Panc1 (cell line): ENCODE measurements at regions of chr2 and their contacts with region 1.

Region 1: DNA sequence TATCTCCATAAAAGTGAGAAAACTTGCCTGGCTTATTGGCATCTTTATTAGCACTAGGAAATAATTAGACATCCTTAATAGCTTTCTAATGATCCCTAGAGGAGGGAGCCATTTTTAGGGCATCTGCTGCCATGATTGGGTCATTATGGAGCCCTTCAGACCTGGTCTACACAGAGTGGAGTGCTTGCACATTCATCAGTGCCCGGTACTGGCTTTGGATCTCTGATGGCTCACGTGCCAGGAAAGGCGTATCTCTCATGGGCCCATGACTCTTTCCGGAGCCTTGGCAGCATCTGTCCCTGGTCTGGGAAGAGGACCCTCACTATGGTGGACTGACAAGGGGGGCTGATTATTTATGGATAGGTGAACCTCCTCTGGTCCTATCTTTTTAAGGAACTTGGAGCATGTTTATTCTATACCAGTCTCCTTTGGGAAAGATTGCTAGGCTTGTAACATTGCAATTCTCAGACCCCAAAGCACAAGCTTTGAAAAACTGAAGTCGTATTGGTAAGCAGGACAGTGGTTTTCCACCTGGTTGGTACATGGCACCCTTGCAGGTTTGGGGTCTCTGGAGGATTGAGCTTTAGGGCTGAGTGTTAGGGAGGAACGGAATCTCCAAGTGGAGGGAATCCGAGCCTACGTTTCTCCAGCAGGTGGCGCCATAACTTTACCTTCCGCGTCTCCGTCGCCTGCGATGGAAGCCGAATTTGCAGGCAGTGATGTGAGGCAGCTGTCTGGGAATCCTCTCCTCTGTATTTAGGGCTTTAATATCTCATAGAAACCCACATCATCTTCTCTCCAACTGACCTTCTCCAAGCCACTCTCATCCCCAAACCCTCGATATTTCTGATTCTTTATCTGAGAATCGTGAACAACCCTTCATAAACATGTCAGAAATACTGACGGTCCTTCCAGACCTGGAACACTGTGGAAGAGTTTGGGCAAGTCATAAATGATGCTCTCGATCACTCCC is 27.8 kb downstream of the SIX2 start:
- DNase-seq: peak; percentile 61
- ATAC-seq: peak; percentile 96
- H3K4me3 ChIP-seq: no peak overlapping the region
- H3K27ac ChIP-seq: no peak overlapping the region
- H3K4me1 ChIP-seq: no peaks in the 10 kb centered on the region
- H3K27me3 ChIP-seq: peaks cover 4% of the 10 kb centered on the region; the same call in 1 of the 2 replicates
- CTCF ChIP-seq: peak; percentile 86

Region 2: DNA sequence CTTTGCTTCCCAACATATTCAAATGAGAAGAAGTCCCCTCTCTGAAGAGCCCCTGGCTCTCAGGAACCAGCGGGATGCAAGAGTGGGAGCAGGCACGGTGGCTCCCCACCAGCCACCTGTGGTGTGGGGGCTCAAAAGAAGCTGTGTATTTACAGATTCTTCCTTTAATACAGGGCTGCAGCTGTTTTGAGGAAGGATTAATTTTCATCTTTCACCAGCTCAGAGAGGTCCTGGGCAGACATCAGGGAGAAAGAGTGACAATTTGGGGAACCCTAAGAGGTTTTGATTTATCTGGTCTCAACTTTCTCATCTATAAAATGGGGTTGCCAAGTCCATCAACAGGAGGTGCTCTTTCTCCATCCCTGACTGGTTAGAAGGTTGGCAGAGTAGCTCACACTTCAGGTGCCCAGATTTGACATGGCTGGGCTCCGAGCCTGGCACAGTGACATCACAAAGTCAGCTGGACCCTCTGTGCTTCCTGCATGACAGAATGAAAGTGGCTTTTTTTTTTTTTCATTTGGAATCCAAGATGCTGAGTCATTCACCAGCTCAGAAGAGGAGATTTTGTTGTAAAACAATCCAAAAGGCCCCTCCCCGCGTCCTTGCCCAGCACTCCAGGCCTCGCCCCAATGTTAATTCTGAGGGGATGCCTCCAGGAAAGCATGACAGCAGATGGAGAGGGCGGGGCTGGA is 43.3 kb after region 1 on chr2:
- CTCF ChIA-PET with region 1: no interaction called
- POLR2A ChIA-PET with region 1: interaction called, 11 read pairs
- in situ Hi-C with region 1: no loop called
- intact Hi-C with region 1: no loop called
- DNase-seq: peak; percentile 42
- ATAC-seq: no peak
- H3K4me3 ChIP-seq: no peak overlapping the region
- H3K27ac ChIP-seq: no peak overlapping the region
- H3K4me1 ChIP-seq: no peaks in the 10 kb centered on the region
- H3K27me3 ChIP-seq: peaks cover 2% of the 10 kb centered on the region
- CTCF ChIP-seq: peak; percentile 15; the same call in 1 of the 2 replicates

Region 3: GRCh38 chr2:45494269-45494977 is 513.0 kb after region 1 on chr2:
- CTCF ChIA-PET with region 1: interaction called, 12 read pairs
- POLR2A ChIA-PET with region 1: no interaction called
- in situ Hi-C with region 1: no loop called
- intact Hi-C with region 1: loop called (anchors 1 kb)
- DNase-seq: peak; percentile 41
- ATAC-seq: no peak
- H3K4me3 ChIP-seq: no peak overlapping the region
- H3K27ac ChIP-seq: no peak overlapping the region
- H3K4me1 ChIP-seq: no peaks in the 10 kb centered on the region
- H3K27me3 ChIP-seq: no peaks in the 10 kb centered on the region
- CTCF ChIP-seq: peak; percentile 74; the same call in 1 of the 2 replicates